Posterior vena cava (tissue), 2 donors: ENCODE measurements at regions of chr13 and their contacts with region 1.

Region 1: DNA sequence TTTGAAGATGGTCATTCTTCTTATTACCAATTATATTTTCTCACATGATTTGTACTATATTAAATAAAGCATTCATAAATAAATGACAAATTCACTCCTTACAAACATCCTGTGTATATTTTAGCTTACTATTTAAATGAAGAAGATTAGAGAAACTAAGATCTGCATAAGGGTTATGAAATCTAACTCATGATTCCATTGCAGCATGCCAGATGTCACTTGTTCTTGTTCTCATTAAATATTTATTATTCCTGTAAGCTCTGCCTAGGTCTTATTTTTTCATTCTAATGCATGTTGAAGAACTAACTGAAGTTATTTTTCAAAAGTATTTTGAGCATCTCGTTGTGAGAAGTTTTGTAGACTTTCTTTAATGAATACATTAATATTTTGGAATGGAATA is 18.3 kb downstream of the NUP58 start:
- DNase-seq: no peak

Region 2: DNA sequence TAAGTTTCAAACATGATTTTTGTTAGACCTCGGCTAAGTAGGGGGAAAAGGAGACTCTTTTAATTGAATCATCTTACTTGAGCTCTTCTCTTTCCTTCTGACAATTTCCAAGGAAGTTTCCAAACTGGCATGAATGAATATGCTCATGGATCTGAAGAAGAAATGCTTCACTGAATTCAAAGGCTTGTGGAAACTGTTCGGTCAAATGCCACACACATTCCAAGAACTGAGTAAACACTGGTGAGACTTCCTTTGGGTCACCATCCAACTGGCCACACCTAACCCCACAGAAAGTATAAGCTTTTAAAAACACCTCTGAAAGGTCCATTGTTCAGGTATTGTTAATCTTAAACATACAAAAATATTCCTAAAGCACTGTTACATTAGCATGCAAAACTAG is 66.1 kb before region 1 on chr13:
- intact Hi-C with region 1: loop called in 1 of 2 experiments (anchors 10 kb)
- DNase-seq: no peak

Region 3: DNA sequence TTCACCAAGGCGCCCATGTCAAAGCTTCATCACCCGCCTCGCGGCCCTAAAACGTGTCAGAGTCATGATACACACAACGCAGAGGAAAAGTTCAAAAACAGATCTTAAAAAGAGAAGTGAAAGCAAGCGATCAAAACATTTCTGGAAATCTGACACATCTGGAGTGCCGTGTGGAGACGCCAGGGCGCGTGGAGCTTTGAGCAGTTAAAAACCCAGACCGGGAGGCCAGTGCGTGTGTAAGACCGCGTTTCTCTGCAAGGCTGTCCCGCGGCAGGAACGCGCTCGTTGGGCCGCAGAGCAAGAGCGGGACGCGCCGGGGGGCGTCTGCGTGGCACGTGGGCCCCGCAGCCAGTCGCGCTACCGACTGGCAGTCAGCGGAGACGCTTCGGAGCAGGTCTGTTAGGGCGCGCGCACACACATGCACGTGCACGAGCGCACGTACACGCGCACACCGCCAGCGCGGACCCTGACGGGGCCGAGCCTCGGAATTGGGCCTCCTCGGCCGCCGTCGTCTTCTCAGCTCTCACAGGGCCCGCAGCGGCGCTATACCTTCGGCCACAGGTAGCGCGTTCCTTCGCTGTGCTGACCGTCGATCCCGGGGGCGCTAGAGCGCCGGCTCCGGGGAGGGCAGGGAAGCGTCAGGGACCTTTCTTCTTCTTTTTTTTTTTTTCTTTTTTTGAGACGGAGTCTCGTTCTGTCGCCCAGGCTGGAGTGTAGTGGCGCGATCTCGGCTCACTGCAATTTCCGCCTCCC is 866.5 kb after region 1 on chr13:
- intact Hi-C with region 1: no loop called
- DNase-seq: peak; percentile 95

Region 4: GRCh38 chr13:26861941-26862340 is 1542.2 kb after region 1 on chr13:
- intact Hi-C with region 1: no loop called
- DNase-seq: no peak